ENCODE measurements at regions of chr17 and their contacts with region 1.

Region 1: GRCh38 chr17:32486111-32486700 is 587 bp upstream of the CDK5R1 start:
- DNase-seq: peak; percentile 51 to 93 (median 68)
- ATAC-seq: peak; percentile 72
- H3K4me3 ChIP-seq: peak overlapping the region; percentile 38
- H3K4me3 Mint-ChIP-seq: peak overlapping the region; percentile 90
- H3K27ac ChIP-seq: peak overlapping the region; percentile 21
- H3K27ac Mint-ChIP-seq: peak overlapping the region; percentile 62
- H3K4me1 ChIP-seq: peaks cover 42% of the 10 kb centered on the region
- H3K4me1 Mint-ChIP-seq: peaks cover 55% of the 10 kb centered on the region
- H3K27me3 ChIP-seq: no peaks in the 10 kb centered on the region
- H3K27me3 Mint-ChIP-seq: no peaks in the 10 kb centered on the region
- CTCF ChIP-seq: no peak

Region 2: GRCh38 chr17:32461853-32462617 is 24.2 kb before region 1 on chr17:
- CTCF ChIA-PET with region 1: interaction called, 28 read pairs
- POLR2A ChIA-PET with region 1: interaction called, 4 read pairs
- intact Hi-C with region 1: loop called in 1 of 2 experiments (anchors 2 kb)
- DNase-seq: peak; percentile 42 to 83 (median 60)
- ATAC-seq: peak; percentile 89
- H3K4me3 ChIP-seq: no peak overlapping the region
- H3K4me3 Mint-ChIP-seq: no peak overlapping the region
- H3K27ac ChIP-seq: no peak overlapping the region
- H3K27ac Mint-ChIP-seq: peak overlapping the region; percentile 34
- H3K4me1 ChIP-seq: no peaks in the 10 kb centered on the region
- H3K4me1 Mint-ChIP-seq: peaks cover 36% of the 10 kb centered on the region
- H3K27me3 ChIP-seq: no peaks in the 10 kb centered on the region
- H3K27me3 Mint-ChIP-seq: no peaks in the 10 kb centered on the region
- CTCF ChIP-seq: peak; percentile 69

Region 3: GRCh38 chr17:32503251-32504165 is 17.3 kb after region 1 on chr17:
- CTCF ChIA-PET with region 1: no interaction called
- POLR2A ChIA-PET with region 1: interaction called, 51 read pairs
- intact Hi-C with region 1: loop called in 1 of 2 experiments (anchors 2 kb)
- DNase-seq: peak in 11 of 14 experiments; percentile 25 to 89 (median 49)
- ATAC-seq: peak; percentile 90
- H3K4me3 ChIP-seq: peak overlapping the region; percentile 11
- H3K4me3 Mint-ChIP-seq: peak overlapping the region; percentile 64
- H3K27ac ChIP-seq: peak overlapping the region; percentile 87 to 91
- H3K27ac Mint-ChIP-seq: peak overlapping the region; percentile 98
- H3K4me1 ChIP-seq: peaks cover 67% of the 10 kb centered on the region
- H3K4me1 Mint-ChIP-seq: peaks cover 78% of the 10 kb centered on the region
- H3K27me3 ChIP-seq: no peaks in the 10 kb centered on the region
- H3K27me3 Mint-ChIP-seq: no peaks in the 10 kb centered on the region
- CTCF ChIP-seq: no peak

Region 4: GRCh38 chr17:32525122-32525521 is 38.9 kb after region 1 on chr17:
- CTCF ChIA-PET with region 1: interaction called, 15 read pairs
- POLR2A ChIA-PET with region 1: interaction called, 152 read pairs
- intact Hi-C with region 1: loop called (anchors 2 kb)
- DNase-seq: no peak
- ATAC-seq: no peak
- H3K4me3 ChIP-seq: no peak overlapping the region
- H3K4me3 Mint-ChIP-seq: no peak overlapping the region
- H3K27ac ChIP-seq: no peak overlapping the region
- H3K27ac Mint-ChIP-seq: no peak overlapping the region
- H3K4me1 ChIP-seq: peaks cover 44% of the 10 kb centered on the region
- H3K4me1 Mint-ChIP-seq: peaks cover 53% of the 10 kb centered on the region
- H3K27me3 ChIP-seq: no peaks in the 10 kb centered on the region
- H3K27me3 Mint-ChIP-seq: no peaks in the 10 kb centered on the region
- CTCF ChIP-seq: no peak

Region 5: GRCh38 chr17:32755045-32755805 is 269.0 kb after region 1 on chr17:
- CTCF ChIA-PET with region 1: interaction called, 6 read pairs
- POLR2A ChIA-PET with region 1: no interaction called
- intact Hi-C with region 1: loop called (anchors 1 to 2 kb)
- DNase-seq: peak in 3 of 14 experiments; percentile 70 to 73 (median 72)
- ATAC-seq: peak; percentile 82
- H3K4me3 ChIP-seq: no peak overlapping the region
- H3K4me3 Mint-ChIP-seq: no peak overlapping the region
- H3K27ac ChIP-seq: no peak overlapping the region
- H3K27ac Mint-ChIP-seq: no peak overlapping the region
- H3K4me1 ChIP-seq: no peaks in the 10 kb centered on the region
- H3K4me1 Mint-ChIP-seq: peaks cover 13% of the 10 kb centered on the region
- H3K27me3 ChIP-seq: no peaks in the 10 kb centered on the region
- H3K27me3 Mint-ChIP-seq: no peaks in the 10 kb centered on the region
- CTCF ChIP-seq: peak; percentile 56